Left ventricle myocardium inferior (tissue), 1 donor: ENCODE measurements at regions of chrX and their contacts with region 1.

Region 1: DNA sequence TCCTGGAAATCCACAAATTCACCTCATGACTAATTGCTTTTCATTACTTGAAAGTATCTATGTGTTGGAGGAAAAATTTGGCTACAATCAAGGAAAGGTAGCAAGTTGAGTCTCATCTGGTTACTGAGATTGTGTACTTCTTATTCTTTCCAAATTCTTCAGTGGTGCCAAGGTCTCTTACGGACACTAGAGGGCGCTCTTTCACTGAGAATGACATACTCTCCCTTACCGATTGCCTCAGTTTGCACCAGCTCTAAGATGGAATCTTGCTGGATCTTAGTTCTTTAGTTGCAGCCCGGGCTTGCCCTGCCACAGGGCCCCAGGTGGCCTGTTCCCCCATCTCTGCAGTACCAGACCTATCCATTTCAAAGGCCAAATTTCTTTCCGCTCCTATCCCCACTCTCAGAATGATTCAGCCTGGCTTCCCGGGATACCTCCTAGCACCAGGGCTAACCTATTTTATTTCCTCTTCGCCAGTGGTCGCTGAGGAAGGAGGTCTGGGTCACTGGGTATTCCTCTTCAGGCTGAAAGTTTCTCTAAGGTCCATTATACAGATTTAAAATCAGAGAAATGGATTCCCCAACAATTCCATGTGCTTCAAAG is 24.6 kb upstream of the GPR50 start:
- DNase-seq: no peak
- H3K4me3 ChIP-seq: no peak overlapping the region
- H3K27ac ChIP-seq: no peak overlapping the region
- H3K4me1 ChIP-seq: no peaks in the 10 kb centered on the region
- H3K27me3 ChIP-seq: peaks cover 32% of the 10 kb centered on the region
- CTCF ChIP-seq: peak; percentile 72

Region 2: DNA sequence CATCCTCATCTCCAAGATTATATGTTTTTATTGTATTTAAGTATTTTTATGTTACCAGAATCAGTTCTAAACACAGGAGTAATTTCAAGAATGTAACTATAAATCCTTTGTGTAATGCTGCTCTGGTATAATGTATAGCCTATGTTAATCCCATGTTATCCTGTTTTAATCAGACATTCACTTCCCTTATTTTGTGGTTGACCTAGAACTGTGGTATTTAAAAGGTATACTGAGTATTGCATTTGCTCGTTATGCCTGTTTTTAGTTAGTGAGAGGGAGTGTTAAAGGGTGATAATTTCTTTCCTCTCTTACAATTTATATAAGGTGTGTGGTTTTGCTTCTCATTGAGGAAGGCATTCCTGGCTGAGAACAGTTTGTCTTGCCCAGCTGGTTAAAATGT is 557.2 kb before region 1 on chrX:
- intact Hi-C with region 1: no loop called
- DNase-seq: no peak
- H3K4me3 ChIP-seq: no peak overlapping the region
- H3K27ac ChIP-seq: no peak overlapping the region
- H3K4me1 ChIP-seq: no peaks in the 10 kb centered on the region
- H3K27me3 ChIP-seq: no peaks in the 10 kb centered on the region
- CTCF ChIP-seq: no peak

Region 3: DNA sequence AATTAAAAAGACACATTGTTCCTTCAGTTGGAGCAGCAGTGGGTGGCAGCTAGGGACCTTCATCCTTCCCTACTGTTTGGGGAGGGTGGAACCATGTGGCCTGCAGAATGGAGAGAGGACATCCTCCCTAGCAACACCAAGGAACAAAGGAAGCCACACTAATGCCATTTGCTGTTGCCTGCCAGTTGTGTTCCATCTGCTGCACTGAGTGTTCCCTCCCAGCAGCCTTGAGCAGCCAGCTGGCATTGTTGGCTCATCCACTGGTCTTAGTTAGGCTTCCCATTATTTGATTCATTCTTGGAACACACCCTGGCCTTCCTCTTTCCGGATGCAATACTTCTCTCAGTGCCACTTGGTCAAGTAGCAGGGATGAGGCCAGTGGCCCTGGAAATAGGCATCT is 193.6 kb before region 1 on chrX:
- intact Hi-C with region 1: no loop called
- DNase-seq: no peak
- H3K4me3 ChIP-seq: no peak overlapping the region
- H3K27ac ChIP-seq: no peak overlapping the region
- H3K4me1 ChIP-seq: no peaks in the 10 kb centered on the region
- H3K27me3 ChIP-seq: no peaks in the 10 kb centered on the region
- CTCF ChIP-seq: no peak

Region 4: GRCh38 chrX:151680805-151681204 is 529.0 kb after region 1 on chrX:
- intact Hi-C with region 1: loop called (anchors 10 kb)
- DNase-seq: no peak
- H3K4me3 ChIP-seq: no peak overlapping the region
- H3K27ac ChIP-seq: no peak overlapping the region
- H3K4me1 ChIP-seq: no peaks in the 10 kb centered on the region
- H3K27me3 ChIP-seq: no peaks in the 10 kb centered on the region
- CTCF ChIP-seq: peak; percentile 62